ENCODE measurements at regions of chrX and their contacts with region 1.

Region 1: DNA sequence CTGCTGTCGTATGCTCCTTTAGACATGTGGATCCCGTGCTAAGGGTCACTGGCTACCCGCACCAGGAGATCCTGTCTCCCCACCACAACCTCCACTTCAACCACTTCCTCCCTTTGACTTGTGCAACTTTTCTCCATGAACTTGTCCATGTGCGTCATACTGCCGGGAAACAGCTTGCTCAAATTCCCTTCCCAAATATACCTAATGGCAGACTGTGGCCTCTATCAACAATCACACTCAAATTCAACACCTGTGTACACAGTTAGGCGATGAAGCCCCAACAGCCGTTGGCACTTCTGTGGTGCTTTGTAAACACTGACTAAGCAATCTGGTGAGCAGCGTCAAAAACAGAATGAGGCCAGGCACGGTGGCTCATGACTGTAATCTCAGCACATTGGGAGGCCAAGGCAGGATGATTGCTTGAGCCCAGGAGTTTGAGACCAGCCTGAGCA is 49.5 kb downstream of the CD99L2 start:
- DNase-seq: peak in 1 of 2 donors; percentile 30
- ATAC-seq: peak; percentile 68 to 89 (median 86)
- H3K4me3 ChIP-seq: no peak overlapping the region
- H3K27ac ChIP-seq: peak overlapping the region; percentile 75
- H3K4me1 ChIP-seq: peaks cover 19% of the 10 kb centered on the region
- H3K27me3 ChIP-seq: no peaks in the 10 kb centered on the region
- CTCF ChIP-seq: no peak

Region 2: DNA sequence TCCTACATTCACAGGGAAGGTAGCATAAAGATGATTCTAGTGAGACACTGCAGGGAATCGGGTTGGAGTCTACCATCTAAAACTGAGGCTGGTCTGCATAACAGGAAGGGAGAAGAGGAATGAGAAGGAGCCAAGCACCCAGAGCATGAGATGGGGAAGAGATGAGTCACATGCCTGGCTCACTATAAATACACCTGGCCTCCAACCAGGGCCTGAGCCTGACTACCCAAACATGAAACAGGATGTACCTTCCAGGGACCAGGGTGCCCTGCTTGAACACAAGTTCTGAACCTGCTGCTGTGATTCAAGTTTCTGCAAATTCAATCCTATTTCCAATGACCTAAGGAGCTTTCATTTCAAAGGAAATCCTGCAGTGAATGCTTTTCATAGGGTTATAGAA is 24.7 kb after region 1 on chrX:
- intact Hi-C with region 1: loop called in 1 of 2 experiments (anchors 2 kb)
- DNase-seq: peak; percentile 55 to 75
- ATAC-seq: peak; percentile 79 to 84 (median 81)
- H3K4me3 ChIP-seq: peak overlapping the region; percentile 55
- H3K27ac ChIP-seq: peak overlapping the region; percentile 93
- H3K4me1 ChIP-seq: peaks cover 5% of the 10 kb centered on the region
- H3K27me3 ChIP-seq: no peaks in the 10 kb centered on the region
- CTCF ChIP-seq: no peak